Activated CD8-positive, alpha-beta T cell treated with anti-CD3 and anti-CD28 coated beads for 36 hours (primary cell): ENCODE measurements at regions of chr11 and their contacts with region 1.

Region 1: GRCh38 chr11:72793425-72794367 is at the start of gene STARD10:
- DNase-seq: peak; percentile 98
- ATAC-seq: peak; percentile 95
- H3K4me3 Mint-ChIP-seq: peak within 1 kb of the TSS; percentile 97
- H3K27ac Mint-ChIP-seq: peak within 1 kb of the TSS; percentile 100
- H3K4me1 Mint-ChIP-seq: peaks cover 19% of the 10 kb centered on the region
- H3K27me3 Mint-ChIP-seq: no peaks in the 10 kb centered on the region
- CTCF ChIP-seq: peak; percentile 95
- total RNA-seq, gene STARD10: 8.1 to 8.6 TPM

Region 2: GRCh38 chr11:72727521-72727920 is 66.2 kb before region 1 on chr11:
- CTCF ChIA-PET with region 1: interaction called, 99 read pairs
- POLR2A ChIA-PET with region 1: interaction called, 6 read pairs
- intact Hi-C with region 1: loop called (anchors 1 kb)
- DNase-seq: no peak
- ATAC-seq: no peak
- H3K4me3 Mint-ChIP-seq: no peak overlapping the region
- H3K27ac Mint-ChIP-seq: peak overlapping the region; percentile 72
- H3K4me1 Mint-ChIP-seq: peaks cover 9% of the 10 kb centered on the region
- H3K27me3 Mint-ChIP-seq: no peaks in the 10 kb centered on the region
- CTCF ChIP-seq: no peak

Region 3: DNA sequence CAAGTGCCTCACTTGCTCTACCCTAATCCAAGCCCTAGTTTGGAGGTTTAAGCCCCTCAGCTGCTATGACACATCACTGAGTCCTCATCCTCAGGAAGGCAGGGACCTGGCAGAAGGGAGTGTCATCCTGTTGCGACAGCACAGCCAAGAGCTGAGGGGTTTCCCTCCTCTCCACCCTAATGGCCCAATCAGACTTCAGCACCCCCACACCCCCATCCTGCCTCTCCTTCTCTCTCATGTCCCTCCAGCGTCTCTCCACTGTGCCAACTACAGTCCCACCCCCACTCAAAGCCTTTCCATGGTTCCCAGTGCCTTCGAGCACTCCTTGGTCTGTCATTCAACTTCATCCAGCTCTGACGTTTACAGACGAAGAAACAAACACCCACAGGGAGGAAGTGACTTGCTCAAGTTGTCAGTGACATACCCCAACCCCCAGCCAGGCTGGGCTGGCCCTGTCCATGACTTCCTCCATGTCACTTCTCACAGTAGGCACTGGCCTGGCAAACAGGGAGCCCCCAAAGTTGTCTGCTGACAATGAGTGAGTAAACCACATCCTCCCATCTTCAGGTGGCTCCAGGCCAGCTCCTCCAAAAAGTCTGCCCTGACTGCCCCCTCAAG is 57.1 kb before region 1 on chr11:
- CTCF ChIA-PET with region 1: interaction called, 33 read pairs
- POLR2A ChIA-PET with region 1: interaction called, 5 read pairs
- intact Hi-C with region 1: no loop called
- DNase-seq: peak; percentile 90
- ATAC-seq: peak; percentile 90
- H3K4me3 Mint-ChIP-seq: peak overlapping the region; percentile 50
- H3K27ac Mint-ChIP-seq: peak overlapping the region; percentile 98
- H3K4me1 Mint-ChIP-seq: peaks cover 55% of the 10 kb centered on the region
- H3K27me3 Mint-ChIP-seq: no peaks in the 10 kb centered on the region
- CTCF ChIP-seq: no peak

Region 4: DNA sequence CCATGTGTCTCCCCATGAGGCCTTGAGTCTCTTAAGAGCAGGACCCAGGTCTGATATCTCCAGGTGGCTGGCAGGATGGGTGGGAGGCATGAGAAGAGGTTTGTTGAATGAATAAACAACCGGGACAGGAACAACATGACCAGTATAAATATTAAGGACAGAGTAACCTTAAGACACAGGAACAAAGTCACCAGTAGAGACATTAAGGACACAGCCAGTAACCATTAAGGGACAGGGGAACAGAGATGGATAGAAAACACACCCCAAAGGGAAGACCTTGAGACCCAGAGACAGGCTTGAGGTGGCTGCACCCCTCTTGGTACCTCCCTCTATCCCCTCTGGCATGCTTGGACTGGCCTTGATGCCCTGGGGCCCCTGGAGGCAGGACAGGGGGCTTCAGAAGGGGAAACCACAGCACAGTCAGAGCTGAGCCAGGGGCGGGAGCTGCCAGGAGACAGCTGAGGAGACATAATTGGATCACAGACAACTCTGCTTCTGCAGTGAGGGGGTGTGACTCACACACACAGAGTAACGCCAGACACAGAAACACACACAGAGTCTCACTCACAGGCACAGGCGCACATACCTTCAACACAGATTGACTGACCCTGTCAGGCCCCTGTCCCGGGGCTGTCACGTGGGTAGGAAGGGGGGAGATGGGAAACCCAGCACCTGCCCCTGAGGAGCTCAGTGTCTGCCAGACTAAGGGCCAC is 20.6 kb before region 1 on chr11:
- CTCF ChIA-PET with region 1: interaction called, 16 read pairs
- POLR2A ChIA-PET with region 1: interaction called, 4 read pairs
- intact Hi-C with region 1: no loop called
- DNase-seq: no peak
- ATAC-seq: peak; percentile 42
- H3K4me3 Mint-ChIP-seq: no peak overlapping the region
- H3K27ac Mint-ChIP-seq: no peak overlapping the region
- H3K4me1 Mint-ChIP-seq: no peaks in the 10 kb centered on the region
- H3K27me3 Mint-ChIP-seq: no peaks in the 10 kb centered on the region
- CTCF ChIP-seq: no peak

Region 5: DNA sequence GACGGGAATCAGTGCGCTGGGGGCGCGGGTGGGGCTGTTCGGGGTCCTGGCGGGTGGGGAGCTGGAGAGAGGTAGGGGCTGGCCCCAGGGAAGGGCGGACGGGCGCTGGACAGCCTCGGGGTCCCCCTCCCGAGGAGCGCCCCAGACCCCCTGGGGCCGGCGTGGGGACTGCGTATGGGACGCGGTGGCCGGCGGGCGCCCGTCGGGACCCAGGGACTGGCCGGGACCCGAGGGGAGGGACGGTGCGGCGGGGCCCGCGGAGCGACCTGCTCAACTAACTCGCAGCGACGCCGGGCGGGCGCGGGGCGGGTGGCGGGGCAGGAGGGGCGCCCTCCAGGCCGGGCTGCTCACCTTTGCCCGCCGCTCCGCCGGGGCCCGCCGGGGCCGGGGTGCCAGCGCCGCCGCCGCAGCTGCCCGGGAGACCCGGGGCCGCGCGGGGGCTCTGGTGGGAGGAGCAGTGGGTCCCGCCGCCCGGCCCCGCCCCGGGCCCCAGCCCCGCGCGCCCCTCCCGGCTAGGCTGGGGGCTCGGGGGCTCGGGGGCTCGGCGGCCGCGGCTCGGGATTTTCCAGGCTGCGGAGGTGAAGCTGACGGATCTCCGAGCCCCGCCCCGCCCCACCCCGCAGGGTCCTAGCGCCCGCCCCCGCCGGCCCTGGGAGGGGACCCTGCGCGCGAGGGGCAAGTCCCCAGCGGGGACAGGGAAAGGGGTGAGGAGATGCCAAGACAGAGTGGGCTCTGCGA is 12.2 kb before region 1 on chr11:
- CTCF ChIA-PET with region 1: interaction called, 32 read pairs
- POLR2A ChIA-PET with region 1: interaction called, 7 read pairs
- intact Hi-C with region 1: no loop called
- DNase-seq: peak; percentile 57
- ATAC-seq: peak; percentile 75
- H3K4me3 Mint-ChIP-seq: peak overlapping the region; percentile 64
- H3K27ac Mint-ChIP-seq: no peak overlapping the region
- H3K4me1 Mint-ChIP-seq: peaks cover 18% of the 10 kb centered on the region
- H3K27me3 Mint-ChIP-seq: no peaks in the 10 kb centered on the region
- CTCF ChIP-seq: no peak

Region 6: GRCh38 chr11:72808331-72808798 is 14.7 kb after region 1 on chr11:
- CTCF ChIA-PET with region 1: interaction called, 48 read pairs
- POLR2A ChIA-PET with region 1: interaction called, 23 read pairs
- intact Hi-C with region 1: no loop called
- DNase-seq: no peak
- ATAC-seq: no peak
- H3K4me3 Mint-ChIP-seq: no peak overlapping the region
- H3K27ac Mint-ChIP-seq: no peak overlapping the region
- H3K4me1 Mint-ChIP-seq: peaks cover 19% of the 10 kb centered on the region
- H3K27me3 Mint-ChIP-seq: no peaks in the 10 kb centered on the region
- CTCF ChIP-seq: no peak

Region 7: GRCh38 chr11:72814286-72815109 is 20.8 kb after region 1 on chr11 and contains the start of gene ATG16L2:
- CTCF ChIA-PET with region 1: interaction called, 48 read pairs
- POLR2A ChIA-PET with region 1: interaction called, 23 read pairs
- intact Hi-C with region 1: no loop called
- DNase-seq: peak; percentile 89
- ATAC-seq: peak; percentile 68
- H3K4me3 Mint-ChIP-seq: peak within 1 kb of the TSS; percentile 97
- H3K27ac Mint-ChIP-seq: peak within 1 kb of the TSS; percentile 98
- H3K4me1 Mint-ChIP-seq: peaks cover 28% of the 10 kb centered on the region
- H3K27me3 Mint-ChIP-seq: no peaks in the 10 kb centered on the region
- CTCF ChIP-seq: peak; percentile 5
- total RNA-seq, gene ATG16L2: 70.8 to 71.4 TPM

Region 8: GRCh38 chr11:73059915-73060314 is 266.2 kb after region 1 on chr11:
- CTCF ChIA-PET with region 1: no interaction called
- POLR2A ChIA-PET with region 1: no interaction called
- intact Hi-C with region 1: no loop called
- DNase-seq: no peak
- ATAC-seq: no peak
- H3K4me3 Mint-ChIP-seq: no peak overlapping the region
- H3K27ac Mint-ChIP-seq: no peak overlapping the region
- H3K4me1 Mint-ChIP-seq: peaks cover 23% of the 10 kb centered on the region
- H3K27me3 Mint-ChIP-seq: no peaks in the 10 kb centered on the region
- CTCF ChIP-seq: no peak